ENCODE measurements at regions of chr21 and their contacts with region 1.

Region 1: DNA sequence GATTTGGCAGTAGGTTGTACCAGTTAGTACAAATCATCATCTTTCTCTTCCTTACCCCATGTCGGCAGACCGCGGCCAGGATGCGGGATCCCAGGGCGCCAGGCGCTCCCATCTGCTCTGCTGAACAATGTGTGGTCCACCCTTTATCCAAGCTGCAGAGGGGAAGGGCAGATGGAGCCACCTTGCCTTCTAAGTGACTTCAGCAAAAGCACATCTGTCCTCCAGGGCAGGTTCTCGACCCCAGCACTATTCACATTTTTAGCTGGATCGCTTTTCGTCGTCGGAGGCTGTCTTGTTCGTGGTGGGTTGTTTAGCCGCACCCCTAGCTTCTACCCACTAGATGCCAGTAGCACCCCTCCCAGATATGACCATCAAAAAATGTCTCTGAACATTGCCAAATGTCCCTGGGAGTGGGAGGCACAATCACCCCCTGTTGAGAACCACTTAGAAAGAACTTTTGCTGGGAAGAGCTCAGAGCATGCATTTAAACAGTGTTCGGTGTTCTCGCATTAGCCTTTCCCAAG is 58.1 kb upstream of the SIM2 start:
- DNase-seq: peak; percentile 97
- H3K4me3 ChIP-seq: peak overlapping the region; percentile 24
- H3K27ac ChIP-seq: peak overlapping the region; percentile 96
- H3K4me1 ChIP-seq: peaks cover 38% of the 10 kb centered on the region
- H3K27me3 ChIP-seq: no peaks in the 10 kb centered on the region
- CTCF ChIP-seq: peak; percentile 70

Region 2: GRCh38 chr21:36330904-36331303 is 309.9 kb before region 1 on chr21:
- CTCF ChIA-PET with region 1: no interaction called
- POLR2A ChIA-PET with region 1: interaction called, 20 read pairs
- intact Hi-C with region 1: no loop called
- DNase-seq: peak; percentile 59
- H3K4me3 ChIP-seq: no peak overlapping the region
- H3K27ac ChIP-seq: no peak overlapping the region
- H3K4me1 ChIP-seq: peaks cover 9% of the 10 kb centered on the region
- H3K27me3 ChIP-seq: no peaks in the 10 kb centered on the region
- CTCF ChIP-seq: peak; percentile 70

Region 3: DNA sequence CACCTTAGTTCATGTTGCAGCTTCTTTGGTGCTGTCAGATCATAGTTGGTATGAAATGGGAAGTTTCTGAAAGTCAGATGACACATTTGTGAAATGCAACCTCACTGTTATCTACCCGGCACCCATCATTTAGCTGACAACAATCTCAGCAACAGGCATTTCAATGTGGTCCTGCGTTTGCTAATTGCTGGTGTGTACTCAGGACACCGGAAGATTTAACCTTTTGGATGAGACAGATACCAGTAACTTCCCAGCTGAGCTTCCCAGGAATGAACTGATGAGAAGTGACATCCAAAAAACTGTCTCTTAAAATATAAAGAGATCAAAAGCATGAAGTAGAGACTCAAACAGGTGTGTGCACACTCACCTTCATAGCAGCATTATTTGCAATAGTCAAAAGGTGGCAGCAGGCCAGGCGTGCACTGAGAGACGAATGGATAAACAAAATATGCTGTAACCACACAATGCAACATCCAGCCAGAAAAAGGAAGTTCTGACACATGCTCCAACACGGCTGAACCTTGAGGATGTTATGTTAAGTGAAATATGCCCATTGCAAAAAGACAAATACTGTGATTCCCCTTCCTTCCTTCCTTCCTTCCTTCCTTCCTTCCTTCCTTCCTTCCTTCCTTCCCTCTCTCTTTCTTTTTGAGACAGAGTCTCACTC is 153.0 kb before region 1 on chr21:
- CTCF ChIA-PET with region 1: interaction called, 4 read pairs
- POLR2A ChIA-PET with region 1: interaction called, 12 read pairs
- intact Hi-C with region 1: loop called (anchors 1 kb)
- DNase-seq: peak; percentile 95
- H3K4me3 ChIP-seq: no peak overlapping the region
- H3K27ac ChIP-seq: peak overlapping the region; percentile 88
- H3K4me1 ChIP-seq: peaks cover 47% of the 10 kb centered on the region
- H3K27me3 ChIP-seq: no peaks in the 10 kb centered on the region
- CTCF ChIP-seq: no peak

Region 4: DNA sequence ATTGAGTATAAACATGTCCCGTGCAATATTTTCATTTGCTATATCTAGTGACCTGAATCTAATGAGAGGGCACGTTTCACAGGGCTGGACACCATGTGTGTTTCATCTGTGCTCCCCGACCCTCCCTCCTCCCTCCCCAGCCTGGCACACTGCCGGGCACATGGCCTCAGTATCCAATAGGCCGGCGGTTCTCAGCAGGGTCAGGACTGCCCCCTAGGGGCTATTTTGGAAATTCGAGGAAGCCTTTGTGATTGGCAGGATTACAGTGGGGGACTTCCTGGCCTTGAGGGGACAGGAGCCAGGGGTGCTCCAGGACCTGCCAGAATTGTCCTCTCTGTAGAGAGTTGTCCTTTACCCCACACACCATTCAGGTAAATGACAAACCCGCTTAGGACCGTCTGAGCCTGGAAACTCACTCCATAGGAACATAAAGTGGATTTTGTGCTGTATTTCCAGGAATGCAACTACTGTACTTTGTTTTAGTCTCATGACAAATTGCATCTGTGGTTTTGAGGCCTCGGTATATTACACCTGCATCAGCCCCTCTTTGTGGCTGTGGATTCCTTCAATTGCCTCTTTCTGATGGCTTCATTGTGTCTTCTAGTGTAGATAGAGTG is 51.3 kb before region 1 on chr21:
- CTCF ChIA-PET with region 1: no interaction called
- POLR2A ChIA-PET with region 1: interaction called, 20 read pairs
- intact Hi-C with region 1: no loop called
- DNase-seq: peak; percentile 81
- H3K4me3 ChIP-seq: no peak overlapping the region
- H3K27ac ChIP-seq: peak overlapping the region; percentile 4
- H3K4me1 ChIP-seq: peaks cover 8% of the 10 kb centered on the region
- H3K27me3 ChIP-seq: no peaks in the 10 kb centered on the region
- CTCF ChIP-seq: peak; percentile 83

Region 5: GRCh38 chr21:36706951-36707762 is 66.4 kb after region 1 on chr21:
- CTCF ChIA-PET with region 1: interaction called, 3 read pairs
- POLR2A ChIA-PET with region 1: no interaction called
- intact Hi-C with region 1: loop called (anchors 5 kb)
- DNase-seq: peak; percentile 74
- H3K4me3 ChIP-seq: peak overlapping the region; percentile 12
- H3K27ac ChIP-seq: peak overlapping the region; percentile 92
- H3K4me1 ChIP-seq: peaks cover 45% of the 10 kb centered on the region
- H3K27me3 ChIP-seq: no peaks in the 10 kb centered on the region
- CTCF ChIP-seq: 0 out of 2 replicates have a peak, but pooled peaks have one; percentile 26

Region 6: GRCh38 chr21:36854391-36854790 is 213.6 kb after region 1 on chr21:
- CTCF ChIA-PET with region 1: interaction called, 6 read pairs
- POLR2A ChIA-PET with region 1: no interaction called
- intact Hi-C with region 1: loop called (anchors 5 kb)
- DNase-seq: peak; percentile 77
- H3K4me3 ChIP-seq: no peak overlapping the region
- H3K27ac ChIP-seq: no peak overlapping the region
- H3K4me1 ChIP-seq: peaks cover 7% of the 10 kb centered on the region
- H3K27me3 ChIP-seq: no peaks in the 10 kb centered on the region
- CTCF ChIP-seq: peak; percentile 82

Region 7: DNA sequence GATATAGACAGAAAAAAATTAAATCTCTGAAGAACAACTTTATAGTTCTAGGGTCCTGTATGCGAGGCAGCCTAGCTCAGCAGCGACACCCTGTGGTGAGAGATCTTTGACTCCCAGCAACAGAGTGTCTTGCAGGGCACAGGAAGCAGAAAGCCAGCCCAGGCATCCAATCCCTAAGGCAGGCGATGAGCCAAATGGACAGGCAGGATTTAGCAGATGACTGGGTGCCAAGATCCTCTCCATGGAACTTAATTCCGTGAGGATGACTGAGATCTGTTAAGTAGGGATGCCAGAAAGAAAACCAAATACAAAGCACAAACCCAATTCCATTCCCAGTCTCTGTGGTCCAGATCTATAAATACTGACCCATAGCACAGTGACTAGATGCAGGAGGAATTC is 286.9 kb after region 1 on chr21:
- CTCF ChIA-PET with region 1: interaction called, 12 read pairs
- POLR2A ChIA-PET with region 1: no interaction called
- intact Hi-C with region 1: loop called (anchors 2 kb)
- DNase-seq: peak; percentile 91
- H3K4me3 ChIP-seq: no peak overlapping the region
- H3K27ac ChIP-seq: no peak overlapping the region
- H3K4me1 ChIP-seq: peaks cover 29% of the 10 kb centered on the region
- H3K27me3 ChIP-seq: no peaks in the 10 kb centered on the region
- CTCF ChIP-seq: peak; percentile 97

Region 8: GRCh38 chr21:37087188-37087587 is 446.4 kb after region 1 on chr21:
- CTCF ChIA-PET with region 1: no interaction called
- POLR2A ChIA-PET with region 1: no interaction called
- intact Hi-C with region 1: no loop called
- DNase-seq: peak; percentile 83
- H3K4me3 ChIP-seq: no peak overlapping the region
- H3K27ac ChIP-seq: peak overlapping the region; percentile 28
- H3K4me1 ChIP-seq: peaks cover 15% of the 10 kb centered on the region
- H3K27me3 ChIP-seq: no peaks in the 10 kb centered on the region
- CTCF ChIP-seq: peak; percentile 79

Region 9: GRCh38 chr21:37117204-37117603 is 476.4 kb after region 1 on chr21:
- CTCF ChIA-PET with region 1: no interaction called
- POLR2A ChIA-PET with region 1: no interaction called
- intact Hi-C with region 1: no loop called
- DNase-seq: no peak
- H3K4me3 ChIP-seq: no peak overlapping the region
- H3K27ac ChIP-seq: no peak overlapping the region
- H3K4me1 ChIP-seq: no peaks in the 10 kb centered on the region
- H3K27me3 ChIP-seq: no peaks in the 10 kb centered on the region
- CTCF ChIP-seq: no peak

Measured in A673 (cell line).